ENCODE measurements at regions of chr3 and their contacts with region 1.

Region 1: GRCh38 chr3:98817547-98818041 is 54.5 kb downstream of the ST3GAL6 start:
- DNase-seq: no peak
- H3K4me3 ChIP-seq: no peak overlapping the region
- H3K27ac ChIP-seq: no peak overlapping the region
- H3K4me1 ChIP-seq: peaks cover 0 to 4% (median 0%) of the 10 kb centered on the region in 4 donors
- H3K27me3 ChIP-seq: no peaks in the 10 kb centered on the region
- CTCF ChIP-seq: peak; percentile 68 to 85 (median 82)
- EP300 ChIP-seq: no peak
- POLR2A ChIP-seq: no peak

Region 2: GRCh38 chr3:98039322-98040024 is 778.1 kb before region 1 on chr3:
- in situ Hi-C with region 1: loop called in 1 of 4 experiments (anchors 25 kb)
- intact Hi-C with region 1: no loop called
- DNase-seq: peak; percentile 44
- H3K4me3 ChIP-seq: peak overlapping the region in 2 of 4 donors; percentile 14 to 27
- H3K27ac ChIP-seq: peak overlapping the region in 1 of 4 donors; percentile 27
- H3K4me1 ChIP-seq: no peaks in the 10 kb centered on the region
- H3K27me3 ChIP-seq: peaks cover 21% of the 10 kb centered on the region
- CTCF ChIP-seq: peak; percentile 78 to 91 (median 89)
- EP300 ChIP-seq: no peak
- POLR2A ChIP-seq: no peak

Region 3: GRCh38 chr3:98593046-98593936 is 224.3 kb before region 1 on chr3 and contains the start of gene CPOX:
- in situ Hi-C with region 1: loop called in 1 of 4 experiments (anchors 5 kb)
- intact Hi-C with region 1: no loop called
- DNase-seq: peak; percentile 93
- H3K4me3 ChIP-seq: peak within 1 kb of the TSS; percentile 79 to 92 (median 86)
- H3K27ac ChIP-seq: peak within 1 kb of the TSS; percentile 84 to 93 (median 87)
- H3K4me1 ChIP-seq: peaks cover 8 to 29% (median 19%) of the 10 kb centered on the region in 4 donors
- H3K27me3 ChIP-seq: no peaks in the 10 kb centered on the region
- CTCF ChIP-seq: no peak
- EP300 ChIP-seq: no peak
- POLR2A ChIP-seq: peak; percentile 40
- total RNA-seq, gene CPOX: 17.9 to 30.7 (median 26.3) TPM

Region 4: DNA sequence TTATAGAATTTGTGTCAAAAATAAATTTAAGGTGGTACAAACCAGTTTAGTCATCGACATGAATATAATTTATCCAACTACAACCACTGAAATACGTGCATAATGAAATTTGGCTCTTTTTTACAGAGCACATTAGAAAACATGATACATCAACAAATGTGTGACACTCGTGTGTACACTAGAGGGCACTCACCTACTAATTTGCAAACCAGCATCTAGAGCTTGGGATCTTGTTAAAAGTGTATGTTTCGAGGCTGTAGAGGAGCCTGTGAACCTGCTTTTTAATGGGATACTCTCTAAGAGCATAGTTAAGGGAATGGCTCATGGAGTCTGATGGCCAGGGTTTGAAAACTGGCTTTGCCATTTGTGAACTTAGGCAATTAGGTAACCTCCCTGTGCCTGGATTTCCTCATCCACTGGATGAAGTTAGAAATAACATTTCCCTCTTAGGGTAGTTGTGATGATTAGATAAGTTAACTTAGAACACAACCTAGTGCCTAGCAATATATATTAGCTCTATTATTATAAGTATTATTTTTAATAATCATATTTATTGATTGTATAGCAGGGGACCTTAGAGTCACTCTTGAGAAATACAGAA is 215.4 kb before region 1 on chr3:
- in situ Hi-C with region 1: loop called (anchors 5 to 10 kb)
- intact Hi-C with region 1: loop called (anchors 5 kb)
- DNase-seq: no peak
- H3K4me3 ChIP-seq: no peak overlapping the region
- H3K27ac ChIP-seq: no peak overlapping the region
- H3K4me1 ChIP-seq: peaks cover 0 to 4% (median 0%) of the 10 kb centered on the region in 4 donors
- H3K27me3 ChIP-seq: no peaks in the 10 kb centered on the region
- CTCF ChIP-seq: peak; percentile 43 to 61 (median 53)
- EP300 ChIP-seq: no peak
- POLR2A ChIP-seq: no peak

Region 5: GRCh38 chr3:98994128-98994762 is 176.7 kb after region 1 on chr3:
- in situ Hi-C with region 1: loop called (anchors 5 to 10 kb)
- intact Hi-C with region 1: loop called (anchors 5 kb)
- DNase-seq: no peak
- H3K4me3 ChIP-seq: no peak overlapping the region
- H3K27ac ChIP-seq: no peak overlapping the region
- H3K4me1 ChIP-seq: no peaks in the 10 kb centered on the region
- H3K27me3 ChIP-seq: peaks cover 5% of the 10 kb centered on the region
- CTCF ChIP-seq: peak; percentile 61 to 66 (median 63)
- EP300 ChIP-seq: no peak
- POLR2A ChIP-seq: no peak

Region 6: DNA sequence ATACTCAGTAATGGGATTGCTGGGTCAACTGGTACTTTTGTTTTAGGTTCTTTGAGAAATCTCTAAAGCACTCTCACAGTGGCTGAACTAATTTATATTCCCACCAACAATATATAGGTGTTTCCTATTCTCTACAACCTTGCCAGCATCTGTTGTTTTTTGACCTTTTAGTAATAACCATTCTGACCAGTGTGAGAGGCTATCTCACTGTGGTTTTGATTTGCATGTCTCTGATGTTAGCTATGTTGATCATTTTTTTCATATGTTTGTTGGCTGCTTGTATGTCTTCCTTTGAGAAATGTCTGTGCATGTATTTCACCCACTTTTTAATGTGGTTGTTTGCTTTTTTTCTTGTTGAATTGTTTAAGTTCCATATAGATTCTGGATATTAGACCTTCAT is 182.1 kb after region 1 on chr3:
- in situ Hi-C with region 1: loop called (anchors 5 to 10 kb)
- intact Hi-C with region 1: loop called (anchors 5 kb)
- DNase-seq: no peak
- H3K4me3 ChIP-seq: no peak overlapping the region
- H3K27ac ChIP-seq: no peak overlapping the region
- H3K4me1 ChIP-seq: no peaks in the 10 kb centered on the region
- H3K27me3 ChIP-seq: peaks cover 2% of the 10 kb centered on the region
- CTCF ChIP-seq: no peak
- EP300 ChIP-seq: no peak
- POLR2A ChIP-seq: no peak

Region 7: GRCh38 chr3:99172736-99173657 is 355.4 kb after region 1 on chr3:
- in situ Hi-C with region 1: loop called in 1 of 4 experiments (anchors 10 kb)
- intact Hi-C with region 1: no loop called
- DNase-seq: peak; percentile 42
- H3K4me3 ChIP-seq: no peak overlapping the region
- H3K27ac ChIP-seq: no peak overlapping the region
- H3K4me1 ChIP-seq: no peaks in the 10 kb centered on the region
- H3K27me3 ChIP-seq: no peaks in the 10 kb centered on the region
- CTCF ChIP-seq: peak; percentile 34 to 57 (median 36)
- EP300 ChIP-seq: no peak
- POLR2A ChIP-seq: no peak